GM12878 (cell line): ENCODE measurements at regions of chr5 and their contacts with region 1.

Region 1: GRCh38 chr5:128062172-128062746 is 21.3 kb upstream of the SLC12A2 start:
- DNase-seq: no peak
- ATAC-seq: no peak
- H3K4me3 ChIP-seq: no peak overlapping the region
- H3K27ac ChIP-seq: no peak overlapping the region
- H3K4me1 ChIP-seq: no peaks in the 10 kb centered on the region
- H3K27me3 ChIP-seq: no peaks in the 10 kb centered on the region
- CTCF ChIP-seq: no peak
- EP300 ChIP-seq: no peak
- POLR2A ChIP-seq: no peak
- RAD21 ChIP-seq: no peak

Region 2: DNA sequence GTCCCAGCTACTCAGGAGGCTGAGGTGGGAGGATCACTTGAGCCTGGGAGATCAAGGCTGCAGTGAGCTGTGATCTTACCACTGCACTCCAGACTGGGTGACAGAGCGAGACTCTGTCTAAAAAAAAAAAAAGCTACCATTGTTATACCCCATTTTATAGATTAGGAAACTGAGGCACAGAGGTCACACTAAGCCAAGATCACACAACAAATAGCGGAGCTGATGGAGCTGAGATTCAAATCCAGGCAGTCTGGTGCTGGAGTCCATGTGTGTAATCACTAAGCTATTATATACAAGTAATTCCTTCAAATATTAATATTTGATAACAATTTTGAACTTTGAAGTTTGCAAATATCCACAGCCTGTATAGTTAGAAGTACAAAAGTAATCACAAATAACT is 15.3 kb after region 1 on chr5:
- CTCF ChIA-PET with region 1: interaction called, 3 read pairs
- POLR2A ChIA-PET with region 1: interaction called, 5 read pairs
- RAD21 ChIA-PET with region 1: interaction called, 5 read pairs
- SMC1A ChIA-PET with region 1: interaction called, 10 read pairs
- in situ Hi-C with region 1: no loop called
- intact Hi-C with region 1: no loop called
- DNase-seq: no peak
- ATAC-seq: no peak
- H3K4me3 ChIP-seq: no peak overlapping the region
- H3K27ac ChIP-seq: no peak overlapping the region; the same call in 1 of the 2 replicates
- H3K4me1 ChIP-seq: peaks cover 5% of the 10 kb centered on the region
- H3K27me3 ChIP-seq: no peaks in the 10 kb centered on the region
- CTCF ChIP-seq: no peak
- EP300 ChIP-seq: no peak
- POLR2A ChIP-seq: no peak
- RAD21 ChIP-seq: no peak